CD8-positive, alpha-beta T cell (primary cell): ENCODE measurements at regions of chr11 and their contacts with region 1.

Region 1: GRCh38 chr11:118689851-118690552 is 10.6 kb upstream of the TREH start:
- DNase-seq: peak; percentile 67 to 92 (median 89)
- ATAC-seq: peak; percentile 85
- H3K4me3 ChIP-seq: peak overlapping the region; percentile 45 to 83
- H3K4me3 Mint-ChIP-seq: peak overlapping the region; percentile 74
- H3K27ac ChIP-seq: peak overlapping the region; percentile 40 to 51
- H3K27ac Mint-ChIP-seq: peak overlapping the region; percentile 87
- H3K4me1 ChIP-seq: peaks cover 54% of the 10 kb centered on the region
- H3K4me1 Mint-ChIP-seq: peaks cover 58% of the 10 kb centered on the region
- H3K27me3 ChIP-seq: no peaks in the 10 kb centered on the region
- H3K27me3 Mint-ChIP-seq: no peaks in the 10 kb centered on the region
- CTCF ChIP-seq: peak; percentile 98

Region 2: DNA sequence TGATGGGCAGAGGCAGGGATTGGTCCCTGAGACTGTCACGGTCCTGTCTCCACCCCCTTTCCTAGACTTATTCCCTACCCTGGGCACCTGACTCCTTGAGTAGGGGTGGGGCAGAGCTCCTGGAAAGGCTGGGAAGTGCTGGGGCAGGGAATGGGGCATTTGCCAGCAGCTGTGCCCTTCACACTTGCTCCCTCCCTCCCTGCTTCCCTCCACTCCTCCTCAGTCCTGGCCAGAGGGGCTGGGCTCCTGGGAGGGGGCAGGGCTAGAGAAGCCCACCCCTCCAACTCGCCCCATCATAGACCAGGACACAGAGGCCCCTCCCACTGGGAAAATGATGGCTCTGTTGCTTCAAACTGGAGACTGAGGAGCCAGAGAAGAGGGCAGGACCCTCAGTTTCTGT is 525.1 kb before region 1 on chr11:
- CTCF ChIA-PET with region 1: no interaction called
- POLR2A ChIA-PET with region 1: no interaction called
- intact Hi-C with region 1: no loop called
- DNase-seq: no peak
- ATAC-seq: no peak
- H3K4me3 ChIP-seq: no peak overlapping the region
- H3K4me3 Mint-ChIP-seq: no peak overlapping the region
- H3K27ac ChIP-seq: no peak overlapping the region
- H3K27ac Mint-ChIP-seq: no peak overlapping the region
- H3K4me1 ChIP-seq: no peaks in the 10 kb centered on the region
- H3K4me1 Mint-ChIP-seq: no peaks in the 10 kb centered on the region
- H3K27me3 ChIP-seq: no peaks in the 10 kb centered on the region
- H3K27me3 Mint-ChIP-seq: peaks cover 4% of the 10 kb centered on the region
- CTCF ChIP-seq: no peak

Region 3: DNA sequence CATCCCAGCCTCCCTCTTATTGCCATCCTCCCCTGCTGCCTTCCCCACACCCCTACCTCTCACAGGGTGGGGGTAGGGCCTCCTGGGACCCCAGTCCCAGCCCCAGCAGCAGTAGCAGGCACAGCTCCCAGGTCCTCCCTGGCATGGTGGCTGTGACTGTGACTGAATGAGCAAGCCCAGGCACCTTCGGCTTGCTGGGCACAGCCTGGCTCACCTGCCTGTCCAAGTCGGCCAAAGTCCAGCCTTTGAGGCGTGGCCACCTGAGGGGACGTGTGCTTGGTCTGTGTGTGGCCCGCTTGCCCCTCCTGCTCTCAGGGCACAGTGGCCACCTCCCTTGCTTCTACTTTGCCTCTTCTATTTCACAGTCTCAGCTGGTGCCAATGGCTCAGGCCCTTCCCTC is 10.5 kb before region 1 on chr11 and contains the start of gene TREH:
- CTCF ChIA-PET with region 1: interaction called, 11 read pairs
- POLR2A ChIA-PET with region 1: no interaction called
- intact Hi-C with region 1: no loop called
- DNase-seq: no peak
- ATAC-seq: no peak
- H3K4me3 ChIP-seq: no peak within 1 kb of the TSS
- H3K4me3 Mint-ChIP-seq: no peak within 1 kb of the TSS
- H3K27ac ChIP-seq: no peak within 1 kb of the TSS
- H3K27ac Mint-ChIP-seq: no peak within 1 kb of the TSS
- H3K4me1 ChIP-seq: no peaks in the 10 kb centered on the region
- H3K4me1 Mint-ChIP-seq: no peaks in the 10 kb centered on the region
- H3K27me3 ChIP-seq: no peaks in the 10 kb centered on the region
- H3K27me3 Mint-ChIP-seq: no peaks in the 10 kb centered on the region
- CTCF ChIP-seq: no peak
- total RNA-seq, gene TREH: not detected

Region 4: DNA sequence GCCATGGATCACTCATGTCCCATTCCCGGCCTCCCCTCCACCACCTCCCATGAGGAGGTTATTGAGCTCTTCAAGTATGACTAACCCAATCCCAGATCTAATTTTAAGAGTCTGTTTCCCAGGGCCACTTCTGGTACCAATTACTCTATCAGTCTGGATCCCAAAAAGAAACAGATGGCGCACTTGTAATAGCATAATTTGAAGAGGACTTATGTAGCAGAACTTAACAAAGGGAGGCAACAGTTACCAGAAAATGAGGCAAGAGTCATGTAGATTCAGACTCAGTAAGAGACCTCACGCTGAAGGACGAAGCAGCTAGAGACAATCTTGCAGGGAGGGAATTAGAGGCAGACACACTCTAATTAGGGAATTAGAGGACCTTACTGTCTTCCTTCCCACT is 54.0 kb after region 1 on chr11:
- CTCF ChIA-PET with region 1: interaction called, 33 read pairs
- POLR2A ChIA-PET with region 1: interaction called, 3 read pairs
- intact Hi-C with region 1: loop called (anchors 1 to 2 kb)
- DNase-seq: no peak
- ATAC-seq: no peak
- H3K4me3 ChIP-seq: no peak overlapping the region
- H3K4me3 Mint-ChIP-seq: no peak overlapping the region
- H3K27ac ChIP-seq: no peak overlapping the region
- H3K27ac Mint-ChIP-seq: no peak overlapping the region
- H3K4me1 ChIP-seq: no peaks in the 10 kb centered on the region
- H3K4me1 Mint-ChIP-seq: peaks cover 6% of the 10 kb centered on the region
- H3K27me3 ChIP-seq: no peaks in the 10 kb centered on the region
- H3K27me3 Mint-ChIP-seq: no peaks in the 10 kb centered on the region
- CTCF ChIP-seq: no peak

Region 5: GRCh38 chr11:118763041-118763440 is 73.0 kb after region 1 on chr11:
- CTCF ChIA-PET with region 1: interaction called, 56 read pairs
- POLR2A ChIA-PET with region 1: no interaction called
- intact Hi-C with region 1: no loop called
- DNase-seq: no peak
- ATAC-seq: no peak
- H3K4me3 ChIP-seq: no peak overlapping the region
- H3K4me3 Mint-ChIP-seq: no peak overlapping the region
- H3K27ac ChIP-seq: no peak overlapping the region
- H3K27ac Mint-ChIP-seq: no peak overlapping the region
- H3K4me1 ChIP-seq: peaks cover 2% of the 10 kb centered on the region
- H3K4me1 Mint-ChIP-seq: peaks cover 33% of the 10 kb centered on the region
- H3K27me3 ChIP-seq: no peaks in the 10 kb centered on the region
- H3K27me3 Mint-ChIP-seq: no peaks in the 10 kb centered on the region
- CTCF ChIP-seq: no peak

Region 6: DNA sequence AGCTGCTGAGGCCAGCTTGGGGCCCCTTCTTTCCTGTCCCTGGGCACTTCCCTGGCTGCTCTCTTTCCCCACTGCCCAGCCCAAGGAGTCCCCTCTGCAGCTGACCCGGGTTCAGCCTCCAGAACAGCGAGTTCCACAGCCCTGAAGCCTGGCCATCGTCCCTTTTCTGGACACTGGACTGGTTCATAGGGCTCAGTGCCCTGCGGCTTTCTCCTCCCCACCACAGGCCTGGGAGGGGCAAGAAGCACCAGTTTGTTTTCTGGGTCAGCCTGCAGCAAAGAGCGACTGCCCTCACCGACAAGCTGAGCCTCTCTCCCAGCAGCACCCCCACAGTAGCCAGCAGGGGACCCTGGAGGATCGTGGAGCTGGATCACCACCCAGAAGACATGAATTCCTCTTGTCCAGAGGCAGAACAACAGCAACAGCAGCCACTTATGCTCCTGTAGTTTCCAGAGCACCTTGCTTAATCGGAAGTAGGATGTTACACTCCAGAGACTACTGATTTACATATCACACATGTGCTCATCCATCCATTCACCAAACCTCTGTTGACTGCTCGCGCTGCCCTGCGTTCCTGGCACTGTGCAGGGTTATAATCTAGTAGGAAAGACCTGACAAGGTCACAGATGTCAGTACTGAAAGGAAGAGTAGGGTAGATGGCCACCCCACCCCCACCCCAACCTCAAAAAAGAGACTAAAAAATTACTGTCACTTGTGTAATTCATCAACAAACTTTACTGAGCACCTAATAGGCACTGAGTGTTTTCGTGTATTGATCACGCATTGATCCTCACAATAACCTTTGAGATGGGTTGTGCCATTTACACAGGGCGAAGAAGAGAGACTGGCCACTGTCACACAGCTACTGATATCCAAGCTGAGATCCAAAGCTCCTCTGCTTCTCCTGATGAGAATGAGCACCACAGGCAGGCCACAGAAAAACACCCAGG is 180.7 kb after region 1 on chr11:
- CTCF ChIA-PET with region 1: interaction called, 10 read pairs
- POLR2A ChIA-PET with region 1: interaction called, 4 read pairs
- intact Hi-C with region 1: loop called (anchors 5 kb)
- DNase-seq: peak in 3 of 9 experiments; percentile 19 to 72 (median 61)
- ATAC-seq: peak; percentile 41
- H3K4me3 ChIP-seq: peak overlapping the region; percentile 22 to 30
- H3K4me3 Mint-ChIP-seq: peak overlapping the region; percentile 79
- H3K27ac ChIP-seq: peak overlapping the region; percentile 83 to 86
- H3K27ac Mint-ChIP-seq: peak overlapping the region; percentile 99
- H3K4me1 ChIP-seq: peaks cover 61% of the 10 kb centered on the region
- H3K4me1 Mint-ChIP-seq: peaks cover 60% of the 10 kb centered on the region
- H3K27me3 ChIP-seq: no peaks in the 10 kb centered on the region
- H3K27me3 Mint-ChIP-seq: no peaks in the 10 kb centered on the region
- CTCF ChIP-seq: no peak

Region 7: GRCh38 chr11:118901494-118902335 is 211.7 kb after region 1 on chr11:
- CTCF ChIA-PET with region 1: interaction called, 22 read pairs
- POLR2A ChIA-PET with region 1: no interaction called
- intact Hi-C with region 1: no loop called
- DNase-seq: peak in 3 of 9 experiments; percentile 17 to 41 (median 28)
- ATAC-seq: peak; percentile 5
- H3K4me3 ChIP-seq: no peak overlapping the region
- H3K4me3 Mint-ChIP-seq: no peak overlapping the region
- H3K27ac ChIP-seq: no peak overlapping the region
- H3K27ac Mint-ChIP-seq: peak overlapping the region; percentile 77
- H3K4me1 ChIP-seq: peaks cover 28% of the 10 kb centered on the region
- H3K4me1 Mint-ChIP-seq: peaks cover 52% of the 10 kb centered on the region
- H3K27me3 ChIP-seq: no peaks in the 10 kb centered on the region
- H3K27me3 Mint-ChIP-seq: no peaks in the 10 kb centered on the region
- CTCF ChIP-seq: no peak

Region 8: GRCh38 chr11:118956094-118956846 is 266.3 kb after region 1 on chr11 and contains the start of gene UPK2:
- CTCF ChIA-PET with region 1: interaction called, 14 read pairs
- POLR2A ChIA-PET with region 1: no interaction called
- intact Hi-C with region 1: loop called (anchors 1 kb)
- DNase-seq: peak; percentile 80 to 94 (median 88)
- ATAC-seq: peak; percentile 99
- H3K4me3 ChIP-seq: no peak within 1 kb of the TSS
- H3K4me3 Mint-ChIP-seq: no peak within 1 kb of the TSS
- H3K27ac ChIP-seq: no peak within 1 kb of the TSS
- H3K27ac Mint-ChIP-seq: peak within 1 kb of the TSS; percentile 35
- H3K4me1 ChIP-seq: peaks cover 7% of the 10 kb centered on the region
- H3K4me1 Mint-ChIP-seq: peaks cover 6% of the 10 kb centered on the region
- H3K27me3 ChIP-seq: no peaks in the 10 kb centered on the region
- H3K27me3 Mint-ChIP-seq: peaks cover 2% of the 10 kb centered on the region
- CTCF ChIP-seq: peak; percentile 82
- total RNA-seq, gene UPK2: not detected

Region 9: GRCh38 chr11:119168471-119169281 is 478.7 kb after region 1 on chr11 and contains the start of gene NLRX1:
- CTCF ChIA-PET with region 1: no interaction called
- POLR2A ChIA-PET with region 1: no interaction called
- intact Hi-C with region 1: no loop called
- DNase-seq: peak; percentile 70 to 90 (median 81)
- ATAC-seq: peak; percentile 99
- H3K4me3 ChIP-seq: peak within 1 kb of the TSS; percentile 61 to 70
- H3K4me3 Mint-ChIP-seq: peak within 1 kb of the TSS; percentile 87
- H3K27ac ChIP-seq: peak within 1 kb of the TSS; percentile 60 to 69
- H3K27ac Mint-ChIP-seq: peak within 1 kb of the TSS; percentile 81
- H3K4me1 ChIP-seq: peaks cover 6% of the 10 kb centered on the region
- H3K4me1 Mint-ChIP-seq: no peaks in the 10 kb centered on the region
- H3K27me3 ChIP-seq: no peaks in the 10 kb centered on the region
- H3K27me3 Mint-ChIP-seq: no peaks in the 10 kb centered on the region
- CTCF ChIP-seq: peak; percentile 80
- total RNA-seq, gene NLRX1: 5.1 TPM